ENCODE measurements at regions of chr11 and their contacts with region 1.

Region 1: DNA sequence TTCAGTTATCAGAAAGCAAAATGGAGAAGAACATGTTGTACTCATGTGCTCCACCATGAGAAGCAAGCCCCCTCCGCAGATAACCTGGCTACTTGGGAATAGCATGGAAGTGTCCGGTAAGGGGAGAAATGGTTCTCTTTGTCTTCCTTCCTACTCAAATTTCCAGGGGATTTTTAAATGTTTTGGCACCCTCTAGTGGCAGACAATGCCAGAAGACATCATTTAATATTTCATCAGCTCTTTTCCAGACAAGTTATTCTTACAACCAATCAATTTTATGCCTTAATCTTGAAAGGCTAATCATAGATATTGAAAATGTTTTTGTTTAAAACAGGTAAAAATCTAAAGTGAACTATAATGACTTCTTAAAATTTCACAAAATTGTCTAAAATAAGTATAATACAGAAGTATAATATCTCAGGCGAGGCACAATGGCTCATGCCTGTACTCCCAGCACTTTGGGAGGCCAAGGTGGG is 15.7 kb downstream of the CRTAM start:
- DNase-seq: peak; percentile 79
- ATAC-seq: no peak
- H3K4me3 ChIP-seq: no peak overlapping the region
- H3K4me3 Mint-ChIP-seq: no peak overlapping the region
- H3K27ac ChIP-seq: no peak overlapping the region
- H3K27ac Mint-ChIP-seq: no peak overlapping the region
- H3K4me1 ChIP-seq: peaks cover 14 to 23% of the 10 kb centered on the region in 2 donors
- H3K4me1 Mint-ChIP-seq: peaks cover 24% of the 10 kb centered on the region
- H3K27me3 ChIP-seq: no peaks in the 10 kb centered on the region
- H3K27me3 Mint-ChIP-seq: no peaks in the 10 kb centered on the region
- CTCF ChIP-seq: peak; percentile 84

Region 2: GRCh38 chr11:122563761-122564160 is 290.2 kb before region 1 on chr11:
- CTCF ChIA-PET with region 1: no interaction called
- POLR2A ChIA-PET with region 1: no interaction called
- intact Hi-C with region 1: no loop called
- DNase-seq: no peak
- ATAC-seq: no peak
- H3K4me3 ChIP-seq: no peak overlapping the region
- H3K4me3 Mint-ChIP-seq: no peak overlapping the region
- H3K27ac ChIP-seq: no peak overlapping the region
- H3K27ac Mint-ChIP-seq: no peak overlapping the region
- H3K4me1 ChIP-seq: no peaks in the 10 kb centered on the region
- H3K4me1 Mint-ChIP-seq: no peaks in the 10 kb centered on the region
- H3K27me3 ChIP-seq: peaks cover 0 to 3% (median 0%) of the 10 kb centered on the region in 4 experiments
- H3K27me3 Mint-ChIP-seq: peaks cover 21% of the 10 kb centered on the region
- CTCF ChIP-seq: no peak

Region 3: GRCh38 chr11:122578168-122578825 is 275.7 kb before region 1 on chr11:
- CTCF ChIA-PET with region 1: interaction called, 27 read pairs
- POLR2A ChIA-PET with region 1: no interaction called
- intact Hi-C with region 1: loop called (anchors 1 kb)
- DNase-seq: no peak
- ATAC-seq: no peak
- H3K4me3 ChIP-seq: no peak overlapping the region
- H3K4me3 Mint-ChIP-seq: no peak overlapping the region
- H3K27ac ChIP-seq: no peak overlapping the region
- H3K27ac Mint-ChIP-seq: no peak overlapping the region
- H3K4me1 ChIP-seq: peaks cover 6 to 9% of the 10 kb centered on the region in 2 donors
- H3K4me1 Mint-ChIP-seq: peaks cover 13% of the 10 kb centered on the region
- H3K27me3 ChIP-seq: no peaks in the 10 kb centered on the region
- H3K27me3 Mint-ChIP-seq: peaks cover 7% of the 10 kb centered on the region
- CTCF ChIP-seq: no peak

Region 4: DNA sequence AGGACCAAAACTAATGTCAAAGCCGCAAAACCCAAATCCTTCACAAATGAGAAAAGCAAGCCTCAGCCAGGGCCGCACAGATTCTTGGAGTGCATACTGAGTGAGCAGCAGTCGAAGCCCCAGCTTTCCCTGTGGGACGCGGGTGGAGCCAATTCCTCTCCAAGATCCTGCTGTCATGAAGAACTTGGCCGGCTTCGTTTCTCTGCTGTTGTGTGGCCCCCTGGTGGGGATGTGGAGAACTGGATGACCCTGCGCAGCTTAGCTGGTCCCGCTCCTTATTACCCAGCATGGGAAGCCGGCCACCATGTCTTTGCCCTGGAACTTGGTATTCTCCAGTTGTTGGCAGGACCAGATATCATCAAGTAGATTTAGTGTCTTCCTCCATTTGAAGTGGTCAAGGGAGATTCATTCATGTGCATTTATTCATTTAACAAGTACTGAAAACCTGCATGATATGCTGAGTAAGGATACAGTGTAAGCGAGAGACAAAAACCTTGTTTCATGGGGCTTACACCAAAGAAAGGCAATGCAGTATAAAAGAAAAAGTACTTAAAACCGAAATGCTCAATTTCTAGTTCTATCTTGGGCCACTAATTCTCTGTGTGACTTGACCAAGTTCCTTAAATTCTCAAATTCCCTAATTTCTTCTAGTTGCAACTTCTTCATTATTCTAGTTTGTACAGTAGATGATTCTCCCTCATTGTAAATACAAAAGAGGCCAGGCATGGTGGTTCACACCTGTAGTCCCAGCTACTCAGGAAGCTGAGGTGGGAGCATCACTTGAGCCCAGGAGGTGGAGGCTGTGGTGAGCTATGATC is 72.4 kb before region 1 on chr11:
- CTCF ChIA-PET with region 1: interaction called, 40 read pairs
- POLR2A ChIA-PET with region 1: no interaction called
- intact Hi-C with region 1: loop called (anchors 1 kb)
- DNase-seq: peak; percentile 78
- ATAC-seq: peak; percentile 90
- H3K4me3 ChIP-seq: no peak overlapping the region
- H3K4me3 Mint-ChIP-seq: no peak overlapping the region
- H3K27ac ChIP-seq: no peak overlapping the region
- H3K27ac Mint-ChIP-seq: no peak overlapping the region
- H3K4me1 ChIP-seq: no peaks in the 10 kb centered on the region
- H3K4me1 Mint-ChIP-seq: no peaks in the 10 kb centered on the region
- H3K27me3 ChIP-seq: no peaks in the 10 kb centered on the region
- H3K27me3 Mint-ChIP-seq: no peaks in the 10 kb centered on the region
- CTCF ChIP-seq: peak; percentile 93

Region 5: DNA sequence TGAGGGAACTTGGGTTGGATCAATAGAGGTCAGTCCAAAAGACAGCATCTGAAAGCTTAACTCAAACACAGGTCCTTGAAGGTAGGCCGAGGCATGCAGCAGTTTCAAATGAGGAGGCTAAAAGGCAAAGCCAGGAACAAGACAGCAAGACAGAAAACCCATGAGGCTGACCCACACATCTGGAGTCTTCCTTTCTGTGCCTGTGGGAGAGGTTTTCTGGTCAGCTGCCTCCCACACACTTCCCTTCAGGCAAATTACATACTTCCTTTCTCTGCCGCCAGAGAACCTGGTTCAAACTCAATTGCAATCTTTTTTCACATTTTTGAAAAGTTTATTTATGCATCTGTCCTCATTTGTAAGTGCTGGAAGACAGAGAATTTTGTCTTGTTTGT is 45.5 kb before region 1 on chr11:
- CTCF ChIA-PET with region 1: interaction called, 53 read pairs
- POLR2A ChIA-PET with region 1: no interaction called
- intact Hi-C with region 1: loop called (anchors 5 kb)
- DNase-seq: peak; percentile 33
- ATAC-seq: no peak
- H3K4me3 ChIP-seq: peak overlapping the region in 2 of 5 experiments; percentile 1 to 10
- H3K4me3 Mint-ChIP-seq: peak overlapping the region; percentile 36
- H3K27ac ChIP-seq: no peak overlapping the region
- H3K27ac Mint-ChIP-seq: peak overlapping the region; percentile 1
- H3K4me1 ChIP-seq: peaks cover 34 to 39% of the 10 kb centered on the region in 2 donors
- H3K4me1 Mint-ChIP-seq: peaks cover 48% of the 10 kb centered on the region
- H3K27me3 ChIP-seq: no peaks in the 10 kb centered on the region
- H3K27me3 Mint-ChIP-seq: no peaks in the 10 kb centered on the region
- CTCF ChIP-seq: no peak

Region 6: GRCh38 chr11:122822241-122822640 is 31.8 kb before region 1 on chr11:
- CTCF ChIA-PET with region 1: interaction called, 53 read pairs
- POLR2A ChIA-PET with region 1: no interaction called
- intact Hi-C with region 1: no loop called
- DNase-seq: no peak
- ATAC-seq: no peak
- H3K4me3 ChIP-seq: no peak overlapping the region
- H3K4me3 Mint-ChIP-seq: no peak overlapping the region
- H3K27ac ChIP-seq: no peak overlapping the region
- H3K27ac Mint-ChIP-seq: no peak overlapping the region
- H3K4me1 ChIP-seq: peaks cover 0 to under 1% of the 10 kb centered on the region in 2 donors
- H3K4me1 Mint-ChIP-seq: no peaks in the 10 kb centered on the region
- H3K27me3 ChIP-seq: no peaks in the 10 kb centered on the region
- H3K27me3 Mint-ChIP-seq: peaks cover 20% of the 10 kb centered on the region
- CTCF ChIP-seq: no peak

Region 7: GRCh38 chr11:122843281-122844141 is 10.5 kb before region 1 on chr11:
- CTCF ChIA-PET with region 1: interaction called, 31 read pairs
- POLR2A ChIA-PET with region 1: no interaction called
- intact Hi-C with region 1: loop called (anchors 1 kb)
- DNase-seq: peak; percentile 72
- ATAC-seq: peak; percentile 90
- H3K4me3 ChIP-seq: peak overlapping the region in 2 of 5 experiments; percentile 29 to 36
- H3K4me3 Mint-ChIP-seq: peak overlapping the region; percentile 69
- H3K27ac ChIP-seq: peak overlapping the region; percentile 42 to 83
- H3K27ac Mint-ChIP-seq: peak overlapping the region; percentile 78
- H3K4me1 ChIP-seq: peaks cover 24 to 35% of the 10 kb centered on the region in 2 donors
- H3K4me1 Mint-ChIP-seq: peaks cover 41% of the 10 kb centered on the region
- H3K27me3 ChIP-seq: no peaks in the 10 kb centered on the region
- H3K27me3 Mint-ChIP-seq: no peaks in the 10 kb centered on the region
- CTCF ChIP-seq: no peak

Region 8: GRCh38 chr11:122920579-122920978 is 66.6 kb after region 1 on chr11:
- CTCF ChIA-PET with region 1: no interaction called
- POLR2A ChIA-PET with region 1: no interaction called
- intact Hi-C with region 1: no loop called
- DNase-seq: no peak
- ATAC-seq: no peak
- H3K4me3 ChIP-seq: no peak overlapping the region
- H3K4me3 Mint-ChIP-seq: no peak overlapping the region
- H3K27ac ChIP-seq: no peak overlapping the region
- H3K27ac Mint-ChIP-seq: no peak overlapping the region
- H3K4me1 ChIP-seq: no peaks in the 10 kb centered on the region
- H3K4me1 Mint-ChIP-seq: no peaks in the 10 kb centered on the region
- H3K27me3 ChIP-seq: no peaks in the 10 kb centered on the region
- H3K27me3 Mint-ChIP-seq: peaks cover 3% of the 10 kb centered on the region
- CTCF ChIP-seq: no peak

Region 9: GRCh38 chr11:123054301-123055065 is 200.5 kb after region 1 on chr11:
- CTCF ChIA-PET with region 1: interaction called, 34 read pairs
- POLR2A ChIA-PET with region 1: no interaction called
- intact Hi-C with region 1: no loop called
- DNase-seq: peak; percentile 79
- ATAC-seq: peak; percentile 87
- H3K4me3 ChIP-seq: no peak overlapping the region
- H3K4me3 Mint-ChIP-seq: peak overlapping the region; percentile 38
- H3K27ac ChIP-seq: no peak overlapping the region
- H3K27ac Mint-ChIP-seq: peak overlapping the region; percentile 85
- H3K4me1 ChIP-seq: peaks cover 35 to 46% of the 10 kb centered on the region in 2 donors
- H3K4me1 Mint-ChIP-seq: peaks cover 56% of the 10 kb centered on the region
- H3K27me3 ChIP-seq: no peaks in the 10 kb centered on the region
- H3K27me3 Mint-ChIP-seq: no peaks in the 10 kb centered on the region
- CTCF ChIP-seq: peak; percentile 83

Measured in B cell (primary cell).